GM12878 (cell line): ENCODE measurements at regions of chr7 and their contacts with region 1.

Region 1: GRCh38 chr7:122616951-122617350 is 82.0 kb downstream of the RNF133 start:
- DNase-seq: no peak
- ATAC-seq: no peak
- H3K4me3 ChIP-seq: no peak overlapping the region
- H3K27ac ChIP-seq: no peak overlapping the region
- H3K4me1 ChIP-seq: no peaks in the 10 kb centered on the region
- H3K27me3 ChIP-seq: no peaks in the 10 kb centered on the region
- CTCF ChIP-seq: no peak
- EP300 ChIP-seq: no peak
- POLR2A ChIP-seq: no peak
- RAD21 ChIP-seq: no peak

Region 2: GRCh38 chr7:122595885-122596284 is 21.1 kb before region 1 on chr7:
- CTCF ChIA-PET with region 1: interaction called, 21 read pairs
- POLR2A ChIA-PET with region 1: interaction called, 6 read pairs
- RAD21 ChIA-PET with region 1: interaction called, 33 read pairs
- SMC1A ChIA-PET with region 1: interaction called, 77 read pairs
- in situ Hi-C with region 1: no loop called
- intact Hi-C with region 1: no loop called
- DNase-seq: no peak
- ATAC-seq: no peak
- H3K4me3 ChIP-seq: no peak overlapping the region
- H3K27ac ChIP-seq: no peak overlapping the region
- H3K4me1 ChIP-seq: no peaks in the 10 kb centered on the region
- H3K27me3 ChIP-seq: no peaks in the 10 kb centered on the region
- CTCF ChIP-seq: no peak
- EP300 ChIP-seq: no peak
- POLR2A ChIP-seq: no peak
- RAD21 ChIP-seq: no peak

Region 3: GRCh38 chr7:122602800-122603199 is 14.2 kb before region 1 on chr7:
- CTCF ChIA-PET with region 1: interaction called, 21 read pairs
- POLR2A ChIA-PET with region 1: interaction called, 5 read pairs
- RAD21 ChIA-PET with region 1: interaction called, 33 read pairs
- SMC1A ChIA-PET with region 1: interaction called, 77 read pairs
- in situ Hi-C with region 1: no loop called
- intact Hi-C with region 1: no loop called
- DNase-seq: no peak
- ATAC-seq: no peak
- H3K4me3 ChIP-seq: no peak overlapping the region
- H3K27ac ChIP-seq: no peak overlapping the region
- H3K4me1 ChIP-seq: no peaks in the 10 kb centered on the region
- H3K27me3 ChIP-seq: no peaks in the 10 kb centered on the region
- CTCF ChIP-seq: no peak
- EP300 ChIP-seq: no peak
- POLR2A ChIP-seq: no peak
- RAD21 ChIP-seq: no peak

Region 4: GRCh38 chr7:122628651-122629411 is 11.9 kb after region 1 on chr7:
- CTCF ChIA-PET with region 1: interaction called, 5 read pairs
- POLR2A ChIA-PET with region 1: interaction called, 14 read pairs
- RAD21 ChIA-PET with region 1: interaction called, 11 read pairs
- SMC1A ChIA-PET with region 1: interaction called, 8 read pairs
- in situ Hi-C with region 1: no loop called
- intact Hi-C with region 1: no loop called
- DNase-seq: no peak
- ATAC-seq: peak; percentile 44
- H3K4me3 ChIP-seq: no peak overlapping the region
- H3K27ac ChIP-seq: no peak overlapping the region
- H3K4me1 ChIP-seq: no peaks in the 10 kb centered on the region
- H3K27me3 ChIP-seq: no peaks in the 10 kb centered on the region
- CTCF ChIP-seq: no peak
- EP300 ChIP-seq: no peak
- POLR2A ChIP-seq: no peak
- RAD21 ChIP-seq: no peak

Region 5: GRCh38 chr7:122692769-122693309 is 75.9 kb after region 1 on chr7:
- CTCF ChIA-PET with region 1: no interaction called
- POLR2A ChIA-PET with region 1: no interaction called
- RAD21 ChIA-PET with region 1: no interaction called
- SMC1A ChIA-PET with region 1: no interaction called
- in situ Hi-C with region 1: no loop called
- intact Hi-C with region 1: no loop called
- DNase-seq: no peak
- ATAC-seq: no peak
- H3K4me3 ChIP-seq: no peak overlapping the region
- H3K27ac ChIP-seq: no peak overlapping the region
- H3K4me1 ChIP-seq: no peaks in the 10 kb centered on the region
- H3K27me3 ChIP-seq: no peaks in the 10 kb centered on the region
- CTCF ChIP-seq: no peak
- EP300 ChIP-seq: no peak
- POLR2A ChIP-seq: no peak
- RAD21 ChIP-seq: no peak

Region 6: DNA sequence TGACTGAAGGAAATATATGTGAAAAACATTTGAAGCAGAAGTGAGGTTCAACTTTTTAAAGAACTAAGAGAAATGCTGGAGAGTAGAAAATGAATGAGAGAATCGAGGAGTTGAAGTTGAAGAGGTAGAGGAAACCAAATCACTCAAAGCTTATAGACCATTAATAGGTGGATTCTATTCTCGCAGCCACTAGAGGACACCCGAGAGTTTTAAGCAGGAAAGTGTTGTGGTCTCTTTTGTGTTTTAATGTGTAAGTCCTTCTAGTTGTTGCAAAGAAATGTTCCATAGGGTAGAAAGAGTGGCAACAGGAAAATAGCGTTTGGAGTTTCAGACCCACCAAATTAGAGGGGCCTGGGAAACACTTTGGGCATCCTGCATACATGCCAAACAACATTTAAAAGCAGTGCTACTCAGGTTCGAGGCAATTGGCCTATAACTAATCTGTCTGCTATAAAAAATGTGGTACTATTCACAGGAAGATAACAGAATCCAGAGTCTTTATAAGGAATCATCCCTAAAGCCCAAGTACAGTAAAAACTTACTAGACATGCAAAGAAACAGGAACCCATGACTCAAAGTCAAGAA is 453.8 kb after region 1 on chr7:
- CTCF ChIA-PET with region 1: no interaction called
- POLR2A ChIA-PET with region 1: no interaction called
- RAD21 ChIA-PET with region 1: no interaction called
- SMC1A ChIA-PET with region 1: no interaction called
- in situ Hi-C with region 1: no loop called
- intact Hi-C with region 1: no loop called
- DNase-seq: no peak
- ATAC-seq: peak; percentile 81
- H3K4me3 ChIP-seq: no peak overlapping the region
- H3K27ac ChIP-seq: no peak overlapping the region
- H3K4me1 ChIP-seq: no peaks in the 10 kb centered on the region
- H3K27me3 ChIP-seq: no peaks in the 10 kb centered on the region
- CTCF ChIP-seq: peak; percentile 61 to 74 (median 71)
- EP300 ChIP-seq: no peak
- POLR2A ChIP-seq: no peak
- RAD21 ChIP-seq: peak; percentile 80